Activated CD4-positive, alpha-beta T cell treated with anti-CD3 and anti-CD28 coated beads, Interleukin-2, amount 10 ng/mL, durations not matched to agents 24 days and 14 days (primary cell): ENCODE measurements at regions of chr1 and their contacts with region 1.

Region 1: GRCh38 chr1:11735854-11736745 is at the start of gene AGTRAP:
- DNase-seq: peak; percentile 96
- H3K4me3 Mint-ChIP-seq: peak within 1 kb of the TSS; percentile 98
- H3K27ac Mint-ChIP-seq: peak within 1 kb of the TSS; percentile 93
- H3K4me1 Mint-ChIP-seq: peaks cover 54% of the 10 kb centered on the region
- H3K27me3 Mint-ChIP-seq: no peaks in the 10 kb centered on the region
- total RNA-seq, gene AGTRAP: 13.1 and 14.0 TPM in 2 replicates

Region 2: GRCh38 chr1:11272832-11273594 is 463.1 kb before region 1 on chr1 and contains the start of gene UBIAD1:
- intact Hi-C with region 1: loop called (anchors 10 kb)
- DNase-seq: peak; percentile 93
- H3K4me3 Mint-ChIP-seq: peak within 1 kb of the TSS; percentile 91
- H3K27ac Mint-ChIP-seq: peak within 1 kb of the TSS; percentile 89
- H3K4me1 Mint-ChIP-seq: peaks cover 24% of the 10 kb centered on the region
- H3K27me3 Mint-ChIP-seq: peaks cover 2% of the 10 kb centered on the region
- total RNA-seq, gene UBIAD1: 32.4 and 32.5 TPM in 2 replicates

Region 3: GRCh38 chr1:11661103-11661502 is 75.0 kb before region 1 on chr1:
- intact Hi-C with region 1: loop called (anchors 5 kb)
- DNase-seq: no peak
- H3K4me3 Mint-ChIP-seq: no peak overlapping the region
- H3K27ac Mint-ChIP-seq: no peak overlapping the region
- H3K4me1 Mint-ChIP-seq: peaks cover 7% of the 10 kb centered on the region
- H3K27me3 Mint-ChIP-seq: no peaks in the 10 kb centered on the region

Region 4: GRCh38 chr1:11805447-11806306 is 69.6 kb after region 1 on chr1 and contains the starts of genes CLCN6 and MTHFR:
- intact Hi-C with region 1: loop called (anchors 2 kb)
- DNase-seq: peak; percentile 100
- H3K4me3 Mint-ChIP-seq: peak within 1 kb of the TSS; percentile 99
- H3K27ac Mint-ChIP-seq: peak within 1 kb of the TSS; percentile 95
- H3K4me1 Mint-ChIP-seq: peaks cover 53% of the 10 kb centered on the region
- H3K27me3 Mint-ChIP-seq: no peaks in the 10 kb centered on the region
- total RNA-seq, gene CLCN6: 12.7 and 15.2 TPM in 2 replicates
- total RNA-seq, gene MTHFR: 15.6 and 18.4 TPM in 2 replicates